ENCODE measurements at regions of chr14 and their contacts with region 1.

Region 1: GRCh38 chr14:21014761-21015190 is 10.1 kb downstream of the NDRG2 start:
- DNase-seq: peak; percentile 71 to 98 (median 92)

Region 2: GRCh38 chr14:21039585-21040369 is 25.0 kb after region 1 on chr14:
- intact Hi-C with region 1: loop called (anchors 2 kb)
- DNase-seq: peak in 33 of 42 donors; percentile 37 to 85 (median 66)

Region 3: GRCh38 chr14:21097636-21098075 is 82.9 kb after region 1 on chr14:
- intact Hi-C with region 1: loop called (anchors 2 kb)
- DNase-seq: peak in 10 of 42 donors; percentile 10 to 72 (median 46)

Region 4: GRCh38 chr14:21241218-21241819 is 226.5 kb after region 1 on chr14:
- intact Hi-C with region 1: no loop called
- DNase-seq: no peak

Measured in head of caudate nucleus (tissue), 42 donors.